ENCODE measurements at regions of chr3 and their contacts with region 1.

Region 1: DNA sequence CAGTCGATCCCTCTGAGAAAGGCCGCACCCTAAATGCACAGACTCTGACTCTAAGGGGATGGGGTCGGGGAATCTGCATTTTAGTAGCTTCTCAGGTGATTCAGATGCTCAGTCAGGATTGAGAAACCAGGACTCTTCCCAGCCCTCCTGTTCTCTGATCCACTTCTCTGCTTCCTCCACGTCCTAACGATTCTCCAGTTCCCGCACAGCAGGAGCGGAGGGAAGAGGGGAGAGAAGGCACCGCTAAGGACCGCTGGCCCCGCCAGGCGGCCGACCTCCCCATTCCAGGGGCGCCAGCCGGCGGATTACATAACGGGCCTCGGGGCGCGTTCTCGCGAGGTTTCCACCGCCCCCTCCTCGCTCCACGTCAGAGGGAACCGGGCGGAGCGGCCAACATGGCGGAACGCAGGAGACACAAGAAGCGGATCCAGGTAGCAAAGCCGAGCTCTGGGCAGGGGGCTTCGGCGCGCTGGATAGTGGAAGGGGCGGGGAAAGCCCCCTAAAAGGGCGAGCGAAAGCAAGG is at the start of gene SEC62:
- DNase-seq: peak; percentile 92 to 97 (median 96)
- ATAC-seq: peak; percentile 95
- H3K4me3 ChIP-seq: peak within 1 kb of the TSS; percentile 80
- H3K4me3 Mint-ChIP-seq: peak within 1 kb of the TSS; percentile 83 to 98 (median 96)
- H3K27ac ChIP-seq: peak within 1 kb of the TSS; percentile 95
- H3K27ac Mint-ChIP-seq: peak within 1 kb of the TSS; percentile 95 to 99 (median 99)
- H3K4me1 ChIP-seq: peaks cover 22 to 36% of the 10 kb centered on the region in 2 donors
- H3K4me1 Mint-ChIP-seq: peaks cover 37 to 81% (median 69%) of the 10 kb centered on the region in 7 donors
- H3K27me3 ChIP-seq: no peaks in the 10 kb centered on the region
- H3K27me3 Mint-ChIP-seq: peaks cover 0 to 2% (median 0%) of the 10 kb centered on the region in 5 donors
- total RNA-seq, gene SEC62: 75.2 to 156 (median 110) TPM

Region 2: DNA sequence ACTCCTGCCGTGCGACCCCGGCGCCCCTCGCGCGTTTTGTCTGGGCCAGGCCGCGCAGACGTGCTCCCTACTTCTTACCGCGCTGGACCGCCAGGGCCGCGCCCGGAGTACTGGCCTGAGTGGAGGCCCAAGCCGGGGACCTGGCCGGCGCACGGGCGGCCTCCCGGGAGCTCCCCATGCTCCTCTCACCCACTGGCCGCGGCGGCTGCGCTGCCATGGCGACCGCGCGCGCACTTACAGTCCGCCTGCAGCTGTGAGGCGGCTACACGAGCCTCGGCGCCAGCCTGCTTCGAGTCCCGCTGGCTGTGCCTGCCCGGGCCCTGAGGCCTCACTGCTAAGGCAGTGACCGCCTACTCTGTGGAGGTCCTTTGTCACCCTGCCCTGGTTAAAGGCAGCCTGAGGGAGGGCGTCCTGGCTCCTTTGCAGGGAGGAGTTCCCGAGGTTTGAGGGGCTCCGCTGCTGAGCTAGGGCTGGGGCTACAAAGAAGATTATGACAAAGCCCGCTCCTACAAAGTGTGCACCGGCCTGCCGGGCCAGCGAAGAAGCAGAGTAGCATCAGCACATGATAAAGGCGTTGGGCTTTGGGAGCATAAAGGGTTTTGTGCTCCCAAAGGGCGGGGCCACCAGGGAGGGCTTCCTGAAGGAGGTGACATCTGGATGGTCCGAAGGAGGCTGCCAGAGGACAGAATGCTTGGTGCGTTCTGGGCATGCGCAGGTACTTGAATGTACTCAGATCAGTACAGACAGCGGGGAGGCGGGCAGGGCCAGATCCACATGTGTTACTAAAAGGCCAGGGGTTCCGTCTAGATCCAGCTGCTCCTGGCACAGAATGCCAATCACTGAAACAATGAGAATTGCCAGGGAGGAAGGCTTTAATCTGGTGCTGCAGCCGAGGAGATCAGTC is 153.9 kb before region 1 on chr3 and contains the starts of genes LRRC34 and LRRIQ4:
- CTCF ChIA-PET with region 1: no interaction called
- POLR2A ChIA-PET with region 1: interaction called, 5 read pairs
- intact Hi-C with region 1: loop called (anchors 1 kb)
- DNase-seq: peak; percentile 43 to 72 (median 52)
- ATAC-seq: peak; percentile 72
- H3K4me3 ChIP-seq: peak within 1 kb of the TSS; percentile 85
- H3K4me3 Mint-ChIP-seq: peak within 1 kb of the TSS; percentile 79 to 91 (median 86)
- H3K27ac ChIP-seq: peak within 1 kb of the TSS; percentile 59
- H3K27ac Mint-ChIP-seq: peak within 1 kb of the TSS; percentile 3 to 92 (median 71)
- H3K4me1 ChIP-seq: peaks cover 4 to 6% of the 10 kb centered on the region in 2 donors
- H3K4me1 Mint-ChIP-seq: peaks cover 21 to 40% (median 25%) of the 10 kb centered on the region in 7 donors
- H3K27me3 ChIP-seq: no peaks in the 10 kb centered on the region
- H3K27me3 Mint-ChIP-seq: peaks cover 0 to 18% (median 2%) of the 10 kb centered on the region in 5 donors
- total RNA-seq, gene LRRC34: 0.30 to 3.7 (median 0.42) TPM
- total RNA-seq, gene LRRIQ4: 0.12 TPM in 1 of 5 experiments, not detected in the others

Region 3: GRCh38 chr3:169945313-169945712 is 21.2 kb before region 1 on chr3:
- CTCF ChIA-PET with region 1: interaction called, 3 read pairs
- POLR2A ChIA-PET with region 1: interaction called, 8 read pairs
- intact Hi-C with region 1: loop called in 1 of 2 experiments (anchors 1 kb)
- DNase-seq: peak in 7 of 9 donors; percentile 11 to 34 (median 27)
- ATAC-seq: peak; percentile 96
- H3K4me3 ChIP-seq: no peak overlapping the region
- H3K4me3 Mint-ChIP-seq: peak overlapping the region in 9 of 10 donors; percentile 17 to 71 (median 49)
- H3K27ac ChIP-seq: no peak overlapping the region
- H3K27ac Mint-ChIP-seq: peak overlapping the region in 8 of 9 donors; percentile 2 to 78 (median 25)
- H3K4me1 ChIP-seq: no peaks in the 10 kb centered on the region
- H3K4me1 Mint-ChIP-seq: peaks cover 10 to 23% (median 15%) of the 10 kb centered on the region in 7 donors
- H3K27me3 ChIP-seq: no peaks in the 10 kb centered on the region
- H3K27me3 Mint-ChIP-seq: peaks cover 0 to 7% (median 0%) of the 10 kb centered on the region in 5 donors

Region 4: DNA sequence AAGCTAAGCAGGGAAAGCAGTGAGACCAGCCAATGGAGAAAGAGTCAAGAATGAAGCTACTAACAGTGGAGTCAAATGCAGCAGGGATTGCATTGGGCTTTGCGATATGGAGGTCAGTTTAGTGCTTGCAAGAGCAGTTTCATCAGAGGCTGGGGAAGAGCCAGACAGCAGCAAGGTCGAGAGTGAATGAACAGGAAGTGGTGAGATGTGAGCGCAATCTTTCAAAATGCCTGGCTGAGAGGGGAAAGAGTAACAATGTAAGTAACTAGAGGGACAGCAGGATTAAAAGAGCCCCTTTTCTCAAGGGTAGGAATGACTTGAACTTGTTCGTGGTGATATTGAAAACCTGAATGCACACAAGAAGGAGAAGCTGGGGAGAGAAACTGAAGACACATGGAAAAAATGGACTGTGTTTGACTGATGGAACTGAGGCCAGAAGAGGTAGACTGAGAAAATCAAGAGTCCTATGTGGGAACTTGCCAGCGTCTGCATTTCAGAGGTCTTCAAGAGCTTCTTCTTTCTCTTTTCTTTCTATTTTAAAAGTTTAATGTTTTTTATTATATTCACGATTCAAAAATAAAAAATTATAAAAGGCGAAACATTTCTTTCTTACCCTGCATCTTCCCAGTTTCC is 40.7 kb after region 1 on chr3:
- CTCF ChIA-PET with region 1: interaction called, 5 read pairs
- POLR2A ChIA-PET with region 1: interaction called, 44 read pairs
- intact Hi-C with region 1: loop called in 1 of 2 experiments (anchors 1 kb)
- DNase-seq: peak in 8 of 9 donors; percentile 27 to 61 (median 48)
- ATAC-seq: peak; percentile 88
- H3K4me3 ChIP-seq: no peak overlapping the region
- H3K4me3 Mint-ChIP-seq: peak overlapping the region; percentile 38 to 76 (median 64)
- H3K27ac ChIP-seq: peak overlapping the region; percentile 19
- H3K27ac Mint-ChIP-seq: peak overlapping the region; percentile 26 to 91 (median 78)
- H3K4me1 ChIP-seq: peaks cover 4 to 34% of the 10 kb centered on the region in 2 donors
- H3K4me1 Mint-ChIP-seq: peaks cover 32 to 64% (median 50%) of the 10 kb centered on the region in 7 donors
- H3K27me3 ChIP-seq: no peaks in the 10 kb centered on the region
- H3K27me3 Mint-ChIP-seq: peaks cover 0 to 2% (median 0%) of the 10 kb centered on the region in 5 donors

Region 5: GRCh38 chr3:170221924-170222646 is 255.6 kb after region 1 on chr3 and contains the start of gene PRKCI:
- CTCF ChIA-PET with region 1: no interaction called
- POLR2A ChIA-PET with region 1: no interaction called
- intact Hi-C with region 1: loop called (anchors 1 kb)
- DNase-seq: peak; percentile 63 to 88 (median 83)
- ATAC-seq: peak; percentile 96
- H3K4me3 ChIP-seq: peak within 1 kb of the TSS; percentile 98
- H3K4me3 Mint-ChIP-seq: peak within 1 kb of the TSS; percentile 75 to 97 (median 95)
- H3K27ac ChIP-seq: peak within 1 kb of the TSS; percentile 75
- H3K27ac Mint-ChIP-seq: peak within 1 kb of the TSS; percentile 82 to 97 (median 95)
- H3K4me1 ChIP-seq: peaks cover 0 to 3% of the 10 kb centered on the region in 2 donors
- H3K4me1 Mint-ChIP-seq: peaks cover 15 to 50% (median 38%) of the 10 kb centered on the region in 7 donors
- H3K27me3 ChIP-seq: no peaks in the 10 kb centered on the region
- H3K27me3 Mint-ChIP-seq: peaks cover 0 to 4% (median 0%) of the 10 kb centered on the region in 5 donors
- total RNA-seq, gene PRKCI: 14.7 to 26.2 (median 20.5) TPM